ENCODE measurements at regions of chr5 and their contacts with region 1.

Region 1: DNA sequence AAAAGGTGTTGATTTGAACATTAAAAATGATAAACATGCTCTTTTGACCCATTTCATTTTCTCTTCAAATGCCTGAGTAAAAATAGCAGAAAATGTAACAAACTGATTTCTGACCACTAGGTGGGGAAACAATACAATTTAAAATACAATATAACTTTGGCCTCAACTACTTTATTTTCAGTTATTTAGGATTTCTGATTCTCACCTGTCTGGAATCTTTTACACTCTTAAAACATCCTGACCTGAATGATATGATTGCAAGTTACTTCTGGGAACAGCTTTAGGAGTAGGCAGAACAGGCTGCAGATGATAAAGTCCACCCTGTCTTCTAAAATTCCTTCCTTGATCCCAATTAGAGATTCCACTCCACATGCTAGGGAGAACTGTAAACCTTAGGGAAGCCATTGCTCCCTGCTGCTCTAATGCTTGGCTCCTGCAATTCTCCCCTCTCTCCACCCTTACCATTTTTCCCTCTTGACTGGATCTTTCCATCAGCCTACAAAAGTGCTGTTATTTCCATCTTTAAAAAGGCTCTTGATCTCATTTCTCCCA is 70.3 kb downstream of the FYB1 start:
- DNase-seq: no peak
- H3K4me3 ChIP-seq: no peak overlapping the region
- H3K27ac ChIP-seq: peak overlapping the region in 3 of 8 donors; percentile 42 to 68 (median 52)
- H3K4me1 ChIP-seq: peaks cover 3 to 77% (median 36%) of the 10 kb centered on the region in 6 donors
- H3K27me3 ChIP-seq: no peaks in the 10 kb centered on the region
- CTCF ChIP-seq: peak in 10 of 11 experiments; percentile 12 to 57 (median 40)
- POLR2A ChIP-seq: no peak

Region 2: GRCh38 chr5:39283231-39283818 is 134.3 kb after region 1 on chr5:
- intact Hi-C with region 1: loop called (anchors 10 kb)
- DNase-seq: no peak
- H3K4me3 ChIP-seq: no peak overlapping the region
- H3K27ac ChIP-seq: peak overlapping the region in 2 of 8 donors; percentile 35 to 67
- H3K4me1 ChIP-seq: peaks cover 0 to 14% (median 2%) of the 10 kb centered on the region in 6 donors
- H3K27me3 ChIP-seq: peaks cover 0 to 3% (median 0%) of the 10 kb centered on the region in 7 donors
- CTCF ChIP-seq: peak in 10 of 11 experiments; percentile 49 to 78 (median 69)
- POLR2A ChIP-seq: no peak

Measured in spleen (tissue), 13 donors.